AG04449 (cell line): ENCODE measurements at regions of chrX and their contacts with region 1.

Region 1: DNA sequence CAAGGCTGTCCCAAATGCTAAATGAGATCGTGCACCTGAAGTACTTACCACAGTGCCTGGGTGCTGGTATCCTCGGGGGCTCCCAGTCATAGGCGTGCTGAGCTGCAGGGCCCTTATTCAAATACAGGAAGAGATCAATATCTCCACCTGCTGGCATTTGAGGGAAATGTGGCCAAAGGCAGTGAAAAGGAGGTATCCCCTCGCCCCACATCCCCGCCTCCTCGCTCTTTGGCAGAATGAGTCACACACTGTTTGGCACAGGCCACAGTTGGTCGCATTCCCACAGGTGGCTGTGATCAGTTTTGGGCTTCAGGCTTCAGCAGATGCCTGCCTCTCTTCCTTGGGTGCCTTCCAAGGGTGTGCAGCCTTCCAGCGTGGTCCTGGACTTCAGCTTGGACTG is 28.4 kb downstream of the ZNF185 start:
- DNase-seq: peak; percentile 4
- H3K4me3 ChIP-seq: no peak overlapping the region
- CTCF ChIP-seq: peak; percentile 50

Region 2: DNA sequence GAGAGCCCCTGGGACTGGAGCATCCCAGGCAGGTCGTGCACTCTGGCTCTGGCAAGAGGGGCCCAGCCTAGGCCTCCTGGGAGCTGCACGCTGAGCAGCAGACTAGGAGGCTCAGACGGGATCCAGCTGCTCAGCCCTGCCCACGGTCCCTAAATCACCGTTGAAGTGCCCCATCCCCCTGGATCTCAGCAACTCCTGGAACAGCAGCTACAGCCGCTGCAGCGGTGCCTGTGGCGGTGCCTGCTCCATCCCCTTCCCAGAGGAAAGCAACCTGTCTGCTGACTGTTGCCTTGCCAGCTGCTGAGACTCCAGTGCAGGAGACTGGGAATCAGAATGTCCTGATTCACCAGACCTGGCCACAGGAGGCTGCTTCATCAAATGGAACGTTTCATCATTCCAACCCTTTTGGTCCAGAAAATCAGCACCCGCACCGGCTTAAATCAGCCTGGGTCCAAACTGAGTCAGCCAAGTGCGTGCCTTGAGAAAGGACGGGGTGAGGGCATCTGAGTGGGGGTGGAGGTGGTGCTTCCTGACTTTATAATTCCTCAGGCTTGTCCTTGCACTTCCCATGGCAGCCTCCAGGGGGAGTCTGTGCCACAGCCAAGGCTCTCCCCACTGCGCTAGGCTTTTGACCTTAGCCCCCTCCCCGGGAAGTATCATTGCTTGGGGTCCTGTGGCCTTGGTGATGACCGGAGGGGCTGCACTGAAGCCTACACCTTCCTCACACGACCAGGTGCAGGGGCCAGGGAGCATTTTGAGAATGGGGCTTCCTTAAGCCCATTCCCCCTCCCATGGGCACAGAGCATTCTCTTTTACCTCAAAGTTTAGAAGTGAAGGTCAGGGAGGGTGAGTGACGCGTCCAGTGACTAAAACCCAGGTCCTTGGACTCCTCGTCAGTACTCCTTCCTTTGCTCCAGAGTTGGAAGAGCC is 21.9 kb before region 1 on chrX:
- CTCF ChIA-PET with region 1: interaction called, 19 read pairs
- POLR2A ChIA-PET with region 1: no interaction called
- DNase-seq: peak; percentile 16
- H3K4me3 ChIP-seq: no peak overlapping the region
- CTCF ChIP-seq: peak; percentile 79

Region 3: DNA sequence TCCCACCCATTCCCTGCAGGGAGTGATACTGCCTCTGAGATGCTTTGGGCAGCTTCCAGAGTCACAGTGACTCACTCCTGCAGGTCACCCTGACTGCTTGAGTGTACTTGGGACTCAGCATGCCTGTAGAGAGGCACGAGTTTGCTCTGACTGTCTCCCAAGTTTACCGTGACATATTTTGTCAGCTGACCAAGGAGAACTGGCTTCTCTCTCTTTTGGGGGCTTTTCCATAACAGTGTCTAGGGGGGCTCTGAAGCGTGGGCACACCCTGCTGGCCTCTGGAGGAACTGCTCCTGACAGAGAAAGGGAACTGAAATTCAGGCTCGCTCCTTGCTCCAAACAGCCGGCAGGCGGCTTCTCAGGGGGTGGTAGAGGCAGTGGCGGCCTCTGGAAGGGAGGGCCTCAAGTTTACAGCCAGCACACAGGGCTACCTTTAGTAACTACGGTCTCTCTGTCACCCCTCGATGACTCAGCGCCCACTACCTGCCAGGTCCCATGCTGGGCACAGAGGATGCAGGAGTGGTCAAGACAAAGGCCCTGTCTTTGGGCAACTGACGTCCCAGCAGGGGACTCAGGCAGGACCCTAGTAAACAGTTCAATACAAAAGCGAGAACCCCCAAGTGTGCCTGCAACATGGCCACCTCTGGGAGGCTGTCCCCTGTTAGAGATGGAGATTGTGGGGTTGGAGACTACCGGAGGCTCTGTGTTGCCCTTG is 10.6 kb before region 1 on chrX:
- CTCF ChIA-PET with region 1: interaction called, 15 read pairs
- POLR2A ChIA-PET with region 1: no interaction called
- DNase-seq: peak; percentile 9
- H3K4me3 ChIP-seq: no peak overlapping the region
- CTCF ChIP-seq: peak; percentile 49